ENCODE measurements at regions of chrX and their contacts with region 1.

Region 1: GRCh38 chrX:48083212-48083611 is 11.8 kb upstream of the ZNF630 start:
- DNase-seq: peak; percentile 44 to 47
- H3K4me3 ChIP-seq: no peak overlapping the region
- H3K27ac ChIP-seq: no peak overlapping the region
- H3K4me1 ChIP-seq: no peaks in the 10 kb centered on the region
- H3K27me3 ChIP-seq: no peaks in the 10 kb centered on the region
- CTCF ChIP-seq: peak in 4 of 6 experiments; percentile 56 to 67 (median 60)
- POLR2A ChIP-seq: no peak

Region 2: GRCh38 chrX:47849778-47850177 is 233.4 kb before region 1 on chrX:
- intact Hi-C with region 1: no loop called
- DNase-seq: no peak
- H3K4me3 ChIP-seq: no peak overlapping the region
- H3K27ac ChIP-seq: no peak overlapping the region
- H3K4me1 ChIP-seq: no peaks in the 10 kb centered on the region
- H3K27me3 ChIP-seq: no peaks in the 10 kb centered on the region
- CTCF ChIP-seq: no peak
- POLR2A ChIP-seq: no peak

Region 3: DNA sequence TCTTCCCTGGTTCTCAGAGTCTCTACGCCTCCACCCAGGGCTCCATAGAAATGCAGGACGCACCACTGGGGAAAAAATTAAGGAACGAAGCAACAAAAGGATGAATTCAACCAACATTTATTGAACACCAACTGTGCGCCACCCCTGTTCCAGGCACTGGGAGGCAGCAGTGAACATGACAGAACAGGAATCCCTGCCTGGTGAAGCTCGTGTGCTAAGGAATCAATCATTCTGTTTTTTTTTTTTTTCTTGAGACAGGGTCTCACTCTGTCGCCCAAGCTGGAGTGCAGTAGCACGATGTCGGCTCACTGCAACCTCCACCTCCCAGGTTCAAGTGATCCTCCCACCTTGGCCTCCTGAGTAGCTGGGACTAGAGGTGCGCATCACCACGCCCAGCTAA is 390.9 kb after region 1 on chrX:
- intact Hi-C with region 1: loop called (anchors 5 kb)
- DNase-seq: no peak
- H3K4me3 ChIP-seq: no peak overlapping the region
- H3K27ac ChIP-seq: no peak overlapping the region
- H3K4me1 ChIP-seq: peaks cover 0 to 3% of the 10 kb centered on the region in 2 donors
- H3K27me3 ChIP-seq: no peaks in the 10 kb centered on the region
- CTCF ChIP-seq: no peak
- POLR2A ChIP-seq: no peak